KBM-7 (cell line): ENCODE measurements at regions of chr11 and their contacts with region 1.

Region 1: DNA sequence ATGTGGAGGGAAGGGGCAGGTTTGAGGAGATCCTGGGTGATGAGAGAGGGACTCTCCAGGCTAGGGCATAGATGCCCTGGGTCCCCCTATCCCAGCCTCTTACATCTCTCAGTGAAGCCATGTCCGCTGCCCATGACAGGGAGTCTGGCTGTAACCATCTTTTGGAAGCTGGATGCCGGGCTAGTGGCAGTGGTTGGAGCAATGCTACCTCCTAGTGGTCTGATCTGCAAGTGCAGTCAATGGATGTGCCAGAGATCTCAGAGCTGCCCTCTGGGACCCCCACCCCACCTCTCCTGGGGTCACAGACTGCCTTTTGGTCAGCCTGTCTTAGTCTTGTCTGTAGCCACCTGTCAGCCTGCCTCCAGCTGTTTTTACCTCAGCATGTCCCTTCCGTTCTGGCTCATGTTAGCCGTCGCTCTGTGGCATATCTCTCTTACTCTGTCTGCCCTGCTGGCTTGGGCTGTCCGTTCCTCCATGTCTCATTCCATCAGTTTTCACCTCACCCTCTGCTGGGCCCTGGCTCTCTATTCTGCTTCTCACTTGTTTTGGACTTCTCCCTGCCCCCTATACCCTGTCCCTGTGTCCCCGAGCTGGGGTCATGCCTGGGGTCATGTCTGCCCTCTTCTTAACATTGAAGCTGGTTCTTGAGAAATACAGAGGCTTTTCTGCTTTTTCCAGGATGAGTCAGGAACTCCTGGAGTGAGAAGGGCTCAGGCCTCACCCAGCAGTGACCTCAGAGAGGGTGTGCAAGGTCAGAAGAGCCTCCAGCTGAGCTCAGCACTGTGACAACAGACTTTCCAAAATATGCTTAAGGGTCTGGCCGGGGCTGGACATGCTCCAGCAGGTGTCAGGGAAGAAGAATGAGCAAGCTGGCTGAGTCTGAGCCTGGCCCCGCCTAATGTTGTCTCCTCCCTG is 52.0 kb upstream of the THY1 start:
- DNase-seq: peak; percentile 74

Region 2: GRCh38 chr11:119356349-119357031 is 118.4 kb before region 1 on chr11:
- in situ Hi-C with region 1: loop called (anchors 10 kb)
- DNase-seq: peak; percentile 78